RWPE1 (cell line): ENCODE measurements at regions of chr1 and their contacts with region 1.

Region 1: GRCh38 chr1:1237874-1238701 is 6.1 kb downstream of the B3GALT6 start:
- DNase-seq: no peak
- H3K27ac ChIP-seq: peak overlapping the region; percentile 81
- CTCF ChIP-seq: no peak

Region 2: DNA sequence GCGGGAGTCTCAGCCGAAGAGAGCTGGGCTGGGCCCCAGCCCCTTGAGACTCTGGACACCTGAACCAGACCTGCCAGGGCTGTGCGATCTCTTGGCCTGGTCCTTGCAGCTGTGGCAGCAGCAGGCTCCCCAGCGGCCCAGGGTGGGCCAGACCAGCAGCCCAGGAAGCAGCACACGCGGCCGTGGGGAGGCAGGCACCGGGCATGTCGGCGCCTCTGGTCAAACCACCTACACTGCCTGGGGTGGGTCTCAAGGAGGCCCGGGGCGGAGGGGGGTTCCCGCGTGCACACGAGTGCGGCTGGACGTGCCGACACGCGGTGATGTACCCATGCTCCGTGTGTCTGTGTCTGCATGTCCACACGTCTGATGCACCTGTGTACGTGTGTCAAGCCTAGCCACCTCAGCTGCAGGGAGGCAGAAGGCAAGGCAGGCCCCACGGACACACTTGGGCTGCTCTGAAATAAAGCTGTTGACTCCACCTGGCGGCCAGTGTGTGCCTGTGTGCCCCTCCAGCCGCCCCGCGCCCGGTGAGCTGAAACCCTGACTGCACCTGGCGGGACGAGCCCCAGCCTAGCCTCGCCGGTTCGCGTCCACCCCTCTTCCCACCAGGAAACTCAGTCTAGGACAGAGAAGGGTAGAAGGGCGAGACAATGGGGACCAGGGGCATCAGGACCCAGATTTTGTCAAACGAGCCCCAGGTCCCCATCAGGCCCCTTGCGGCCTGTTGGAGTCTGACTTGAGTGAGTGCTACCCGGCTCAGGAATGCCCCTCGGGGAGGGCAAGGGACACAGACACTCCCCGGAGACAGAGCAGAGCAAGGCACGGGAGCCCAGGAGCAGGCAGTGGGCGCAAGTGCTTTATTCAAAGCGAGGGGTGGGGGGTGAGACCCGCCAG is 53.7 kb after region 1 on chr1:
- CTCF ChIA-PET with region 1: interaction called, 11 read pairs
- POLR2A ChIA-PET with region 1: no interaction called
- DNase-seq: peak; percentile 67
- H3K27ac ChIP-seq: peak overlapping the region; percentile 65
- CTCF ChIP-seq: peak; percentile 83